H1 (cell line): ENCODE measurements at regions of chr12 and their contacts with region 1.

Region 1: DNA sequence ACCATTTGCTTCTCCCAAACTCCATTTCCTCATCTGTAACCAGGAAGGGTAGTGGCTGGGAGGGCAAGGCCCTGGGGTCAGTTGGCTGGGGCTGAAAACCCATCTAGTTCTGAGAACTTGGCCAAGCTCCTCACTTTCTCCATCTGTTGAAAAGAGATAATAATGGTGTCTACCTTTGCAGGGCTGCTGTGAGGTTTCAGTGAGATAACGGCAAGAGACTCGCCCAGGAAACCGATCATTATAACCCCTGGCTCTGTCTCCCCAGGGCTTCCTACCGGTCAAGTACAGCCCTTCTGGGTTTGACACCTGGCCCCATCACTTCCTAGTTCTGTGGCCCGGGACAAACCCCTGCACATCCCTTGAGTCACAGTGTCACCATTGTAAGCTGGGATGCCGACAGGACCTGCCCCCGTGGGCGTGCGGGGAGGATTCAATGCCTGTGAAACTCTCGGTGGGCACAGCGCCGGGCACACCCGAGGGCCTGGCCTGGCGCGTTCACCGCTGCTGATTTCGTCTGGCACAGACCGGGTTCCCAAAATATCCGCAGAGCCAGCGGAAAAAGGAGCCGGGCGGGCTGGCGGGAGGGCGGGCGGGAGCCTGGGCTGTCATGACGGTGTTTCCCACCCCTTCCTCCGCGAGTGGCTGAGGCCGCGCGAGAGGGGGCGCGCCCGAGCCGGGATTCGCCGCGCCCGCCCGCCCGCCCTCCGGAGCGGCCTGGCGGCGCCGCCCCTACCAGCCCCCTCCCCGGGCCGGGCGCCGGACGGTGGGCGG is 4.4 kb downstream of the KMT5A start:
- DNase-seq: peak in 1 of 2 experiments; percentile 64
- H3K4me3 ChIP-seq: peak overlapping the region; percentile 27 to 67 (median 38)
- H3K27ac ChIP-seq: no peak overlapping the region
- H3K4me1 ChIP-seq: peaks cover 0 to 8% (median 4%) of the 10 kb centered on the region in 4 experiments; a peak in 4 of 7 replicates
- H3K27me3 ChIP-seq: peaks cover 1 to 33% (median 28%) of the 10 kb centered on the region in 4 experiments
- CTCF ChIP-seq: no peak
- EP300 ChIP-seq: no peak
- POLR2A ChIP-seq: no peak
- RAD21 ChIP-seq: no peak

Region 2: DNA sequence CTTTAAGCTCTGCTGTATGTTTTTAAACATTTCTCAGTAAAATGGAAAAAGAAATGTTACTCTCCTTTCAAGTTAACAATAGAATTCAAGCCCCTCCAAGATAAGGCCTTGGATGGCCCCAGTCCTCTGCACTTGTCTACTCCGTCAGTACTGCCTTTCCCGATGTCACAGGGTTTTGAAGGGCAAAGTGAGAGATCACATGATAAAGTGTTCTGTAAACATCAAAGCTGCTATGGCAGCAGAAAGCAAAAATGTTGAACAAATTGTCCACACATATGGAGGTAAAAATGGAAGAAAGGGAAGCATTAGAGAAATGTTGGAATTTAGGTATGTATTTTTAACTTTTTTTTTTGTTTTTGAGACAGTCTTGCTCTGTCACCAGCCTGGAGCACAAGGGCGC is 83.2 kb before region 1 on chr12:
- CTCF ChIA-PET with region 1: no interaction called
- POLR2A ChIA-PET with region 1: no interaction called
- DNase-seq: no peak
- H3K4me3 ChIP-seq: no peak overlapping the region
- H3K27ac ChIP-seq: no peak overlapping the region
- H3K4me1 ChIP-seq: no peaks in the 10 kb centered on the region
- H3K27me3 ChIP-seq: no peaks in the 10 kb centered on the region
- CTCF ChIP-seq: no peak
- EP300 ChIP-seq: no peak
- POLR2A ChIP-seq: no peak
- RAD21 ChIP-seq: no peak

Region 3: DNA sequence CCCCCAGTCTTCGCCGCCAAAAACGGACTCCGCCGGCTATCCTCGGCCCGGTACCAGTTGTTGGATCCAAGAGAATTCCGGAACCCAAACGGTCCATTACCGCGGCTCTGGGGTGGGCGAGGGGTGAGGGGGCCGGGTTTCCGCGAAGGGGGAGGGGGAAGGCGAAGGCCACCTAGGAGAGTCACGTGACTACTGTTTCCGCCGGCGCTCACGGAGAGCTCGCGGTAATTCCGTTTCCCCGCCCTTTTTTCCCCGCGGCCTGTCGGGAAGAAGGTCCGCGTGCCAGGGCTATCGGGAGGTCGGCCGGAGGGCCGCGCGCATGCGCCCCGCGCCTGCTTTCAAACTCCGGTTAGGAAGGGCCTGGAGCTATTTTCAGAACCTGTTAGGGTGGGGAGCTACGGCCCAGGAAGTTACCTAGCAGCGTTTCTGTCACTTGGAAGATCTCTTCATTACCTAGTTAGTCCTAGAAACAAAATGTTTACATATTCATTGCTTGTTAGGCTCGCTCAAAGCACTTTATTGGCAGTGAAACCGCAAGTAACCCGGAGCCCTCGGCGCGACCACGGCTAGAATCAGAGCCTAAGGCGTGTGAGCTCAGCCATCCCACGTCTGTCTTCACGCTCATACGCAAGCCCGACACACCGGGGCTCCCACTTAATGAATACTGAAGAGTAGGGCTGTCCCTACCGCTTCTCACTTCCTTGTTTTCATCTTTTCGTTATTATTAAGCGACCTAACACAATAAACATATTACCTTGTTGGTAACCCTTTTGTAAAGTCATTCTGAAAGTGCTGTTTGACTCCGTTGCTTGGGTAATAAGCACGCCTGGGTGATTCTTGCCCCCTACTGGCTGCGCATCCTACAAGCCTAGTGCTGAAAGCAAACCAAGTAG is 23.1 kb before region 1 on chr12:
- CTCF ChIA-PET with region 1: interaction called, 9 read pairs
- POLR2A ChIA-PET with region 1: interaction called, 69 read pairs
- DNase-seq: peak; percentile 95 to 98
- H3K4me3 ChIP-seq: peak overlapping the region; percentile 71 to 92 (median 88)
- H3K27ac ChIP-seq: peak overlapping the region; percentile 83
- H3K4me1 ChIP-seq: peaks cover 0 to 2% (median 0%) of the 10 kb centered on the region in 4 experiments; a peak in 1 of 7 replicates
- H3K27me3 ChIP-seq: no peaks in the 10 kb centered on the region
- CTCF ChIP-seq: peak; percentile 53 to 72 (median 54)
- EP300 ChIP-seq: no peak
- POLR2A ChIP-seq: peak in 1 of 2 experiments; percentile 72; a peak in 2 of 3 replicates
- RAD21 ChIP-seq: peak; percentile 44 to 53